ENCODE measurements at regions of chr5 and their contacts with region 1.

Region 1: GRCh38 chr5:170633235-170634081 is 129.6 kb downstream of the KCNIP1 start:
- DNase-seq: peak; percentile 61 to 76
- H3K4me3 ChIP-seq: peak overlapping the region; percentile 55
- H3K27ac ChIP-seq: peak overlapping the region; percentile 60
- H3K4me1 ChIP-seq: peaks cover 11% of the 10 kb centered on the region
- H3K27me3 ChIP-seq: no peaks in the 10 kb centered on the region
- CTCF ChIP-seq: peak; percentile 42; the same call in 1 of the 2 replicates

Region 2: GRCh38 chr5:168987543-168988300 is 1645.7 kb before region 1 on chr5:
- CTCF ChIA-PET with region 1: no interaction called
- POLR2A ChIA-PET with region 1: no interaction called
- intact Hi-C with region 1: loop called (anchors 5 kb)
- DNase-seq: peak; percentile 44 to 61
- H3K4me3 ChIP-seq: no peak overlapping the region
- H3K27ac ChIP-seq: no peak overlapping the region
- H3K4me1 ChIP-seq: no peaks in the 10 kb centered on the region
- H3K27me3 ChIP-seq: peaks cover 65% of the 10 kb centered on the region
- CTCF ChIP-seq: peak; percentile 89

Region 3: DNA sequence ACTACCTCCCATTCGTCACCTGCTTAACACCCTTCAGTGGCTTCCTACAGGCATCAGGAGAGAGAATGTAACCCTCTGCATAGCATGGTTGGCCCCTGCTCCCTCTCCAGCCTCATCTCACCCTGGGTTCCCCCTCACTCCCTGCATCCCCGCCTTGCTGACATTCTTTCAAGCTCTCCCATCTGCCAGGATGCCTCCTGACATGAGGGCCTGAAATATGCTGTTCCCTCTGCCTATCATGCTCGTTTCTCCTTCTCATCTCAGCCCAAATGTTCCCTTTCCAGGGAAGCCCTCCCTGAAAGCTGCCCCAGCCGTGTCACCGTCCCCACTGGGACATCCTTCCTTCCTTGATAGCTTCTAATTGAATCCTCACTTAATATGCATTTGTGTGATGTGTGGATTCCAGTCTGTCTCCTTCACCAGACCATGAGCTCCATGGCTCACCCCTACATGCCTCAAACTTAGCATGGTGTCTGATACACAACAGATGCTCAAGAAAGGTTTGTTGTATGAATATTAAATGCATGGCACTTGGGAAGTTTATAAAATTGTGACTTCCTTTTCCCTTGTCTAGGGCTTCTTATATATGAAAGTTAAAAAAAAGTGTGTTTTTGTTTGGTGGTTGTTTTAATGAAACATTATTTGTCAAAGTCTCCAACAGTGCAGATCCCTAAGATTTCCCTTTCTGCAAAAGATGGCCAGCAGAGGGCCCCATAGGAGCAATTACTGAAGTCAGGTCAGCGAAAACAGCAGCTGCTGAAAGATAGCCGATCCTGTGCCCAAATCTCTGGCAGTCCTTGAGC is 407.9 kb before region 1 on chr5:
- CTCF ChIA-PET with region 1: interaction called, 3 read pairs
- POLR2A ChIA-PET with region 1: no interaction called
- intact Hi-C with region 1: loop called (anchors 1 kb)
- DNase-seq: peak; percentile 40 to 50
- H3K4me3 ChIP-seq: no peak overlapping the region
- H3K27ac ChIP-seq: no peak overlapping the region
- H3K4me1 ChIP-seq: peaks cover 3% of the 10 kb centered on the region
- H3K27me3 ChIP-seq: no peaks in the 10 kb centered on the region
- CTCF ChIP-seq: peak; percentile 88

Region 4: DNA sequence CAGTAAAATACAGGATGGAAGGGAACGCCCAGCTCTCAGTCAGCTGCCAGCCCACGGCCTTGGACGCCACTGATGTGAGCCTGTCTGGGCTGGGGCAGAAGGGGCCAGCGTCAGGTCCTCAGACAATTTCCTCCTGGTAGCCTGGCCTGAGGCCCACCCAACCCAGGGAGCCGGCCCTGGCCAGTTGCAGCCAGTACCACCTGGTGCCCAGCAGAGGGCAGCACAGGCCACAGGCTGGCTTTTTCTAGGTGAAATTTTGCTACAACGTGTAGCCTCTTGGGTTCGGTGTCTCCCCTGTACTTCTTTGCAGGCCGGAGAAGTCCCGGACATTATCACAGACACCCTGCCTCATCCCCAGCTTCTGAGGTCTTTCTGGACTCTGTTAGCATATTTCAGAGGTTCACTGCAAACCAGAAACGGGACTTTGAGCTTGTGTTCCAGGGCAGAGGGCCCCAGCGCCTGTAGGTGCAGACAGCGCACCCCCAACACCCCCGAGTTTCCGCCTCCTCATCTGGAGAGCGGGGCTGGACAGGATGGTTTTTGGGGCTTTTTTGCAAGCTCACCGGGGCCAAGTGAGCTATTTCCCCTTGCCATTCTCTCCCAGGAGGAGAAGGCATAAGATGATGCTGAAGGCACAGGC is 198.4 kb before region 1 on chr5:
- CTCF ChIA-PET with region 1: interaction called, 3 read pairs
- POLR2A ChIA-PET with region 1: no interaction called
- intact Hi-C with region 1: loop called (anchors 2 kb)
- DNase-seq: peak; percentile 39 to 45
- H3K4me3 ChIP-seq: no peak overlapping the region
- H3K27ac ChIP-seq: no peak overlapping the region
- H3K4me1 ChIP-seq: no peaks in the 10 kb centered on the region
- H3K27me3 ChIP-seq: peaks cover 5% of the 10 kb centered on the region; the same call in 1 of the 2 replicates
- CTCF ChIP-seq: peak; percentile 95

Region 5: DNA sequence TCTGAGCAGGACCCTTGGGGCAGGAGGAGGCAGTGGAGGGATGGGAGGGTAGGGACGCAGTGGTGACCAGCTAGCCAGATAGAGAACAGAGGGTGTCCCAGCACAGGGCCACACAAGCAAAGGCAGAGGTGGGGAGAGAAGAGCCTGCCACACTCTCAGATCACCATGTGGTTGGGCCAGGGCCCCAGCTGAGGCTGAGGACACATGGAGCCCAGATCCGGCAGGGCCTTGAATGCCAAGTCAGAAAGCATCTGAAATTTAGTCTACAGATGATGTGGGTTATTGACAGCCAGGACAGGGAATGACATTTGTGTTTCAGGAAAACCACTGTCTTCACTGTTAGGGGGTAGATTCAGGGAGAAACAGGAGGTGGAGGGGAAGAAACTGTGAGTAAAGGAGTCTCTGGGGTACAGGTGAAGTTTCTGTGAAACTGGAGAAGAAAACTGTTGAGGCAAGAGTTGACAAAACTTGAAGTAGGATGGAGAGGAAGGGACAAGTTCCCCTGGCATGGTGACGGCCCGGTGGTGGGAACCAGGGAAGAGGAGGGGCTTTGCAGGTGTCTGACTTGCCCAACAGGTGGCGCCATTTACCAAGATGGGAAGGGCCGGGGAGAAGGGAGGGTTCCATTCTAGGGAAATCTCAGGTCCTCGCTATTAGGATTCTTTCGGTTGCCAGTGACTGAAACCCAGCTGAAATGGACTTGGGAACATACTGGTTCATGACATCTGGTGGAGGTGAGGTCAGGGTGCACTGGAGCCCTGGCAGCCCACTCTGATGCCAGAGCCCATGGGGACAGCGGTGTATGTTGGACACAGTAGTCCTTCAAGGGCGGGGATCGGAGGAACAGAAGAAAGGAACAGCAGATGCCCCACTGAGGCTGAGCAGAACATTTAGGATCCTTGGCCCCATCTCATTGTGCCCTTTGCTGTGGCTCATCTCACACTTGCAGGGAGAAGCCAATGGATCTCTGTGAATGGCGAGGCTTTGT is 29.6 kb before region 1 on chr5:
- CTCF ChIA-PET with region 1: no interaction called
- POLR2A ChIA-PET with region 1: no interaction called
- intact Hi-C with region 1: no loop called
- DNase-seq: peak in 1 of 2 experiments; percentile 38
- H3K4me3 ChIP-seq: no peak overlapping the region
- H3K27ac ChIP-seq: no peak overlapping the region
- H3K4me1 ChIP-seq: no peaks in the 10 kb centered on the region
- H3K27me3 ChIP-seq: peaks cover 14% of the 10 kb centered on the region; the same call in 1 of the 2 replicates
- CTCF ChIP-seq: peak; percentile 85

Region 6: GRCh38 chr5:170903075-170903474 is 269.6 kb after region 1 on chr5:
- CTCF ChIA-PET with region 1: no interaction called
- POLR2A ChIA-PET with region 1: no interaction called
- intact Hi-C with region 1: no loop called
- DNase-seq: no peak
- H3K4me3 ChIP-seq: no peak overlapping the region
- H3K27ac ChIP-seq: no peak overlapping the region
- H3K4me1 ChIP-seq: no peaks in the 10 kb centered on the region
- H3K27me3 ChIP-seq: no peaks in the 10 kb centered on the region
- CTCF ChIP-seq: no peak

Region 7: DNA sequence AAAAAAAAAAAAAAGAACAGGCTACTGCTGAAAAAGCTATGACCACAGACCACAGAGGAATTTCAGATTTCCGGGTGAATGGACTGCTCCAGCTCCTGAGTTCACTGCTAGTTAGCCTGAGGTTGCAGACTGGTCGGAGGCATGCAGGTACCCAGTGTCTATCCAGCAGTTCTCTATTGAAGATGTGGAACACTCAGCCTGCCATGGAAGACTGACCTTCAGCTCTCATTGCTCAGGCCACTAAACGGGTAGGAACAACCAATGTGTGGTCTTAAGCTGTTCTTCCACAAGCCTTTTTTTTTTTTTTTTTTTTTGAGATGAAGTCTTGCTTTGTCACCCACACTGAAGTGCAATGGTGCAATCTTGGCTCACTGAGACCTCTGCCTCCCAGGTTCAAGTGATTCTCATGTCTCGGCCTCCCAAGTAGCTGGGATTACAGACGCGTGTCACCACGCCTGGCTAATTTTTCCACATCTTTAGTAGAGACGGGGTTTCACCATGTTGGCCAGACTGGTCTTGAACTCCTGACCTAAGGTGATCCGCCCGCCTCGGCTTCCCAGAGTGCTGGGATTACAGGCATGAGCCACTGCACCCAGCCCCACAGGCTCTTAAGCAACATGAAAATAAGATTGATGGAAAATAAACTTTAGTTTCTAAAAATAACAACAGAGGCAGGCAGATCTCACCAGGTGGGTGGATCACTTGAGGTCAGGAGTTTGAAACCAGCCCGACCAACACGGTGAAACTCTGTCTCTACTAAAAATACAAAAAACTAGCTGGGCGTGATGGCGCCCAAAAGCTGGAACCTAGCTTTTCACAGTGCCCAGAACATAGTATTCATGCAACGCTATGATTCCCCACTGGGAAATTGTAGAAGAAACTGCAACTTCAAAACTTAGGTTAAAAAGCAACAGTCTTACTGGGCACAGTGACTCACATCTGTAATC is 734.2 kb after region 1 on chr5:
- CTCF ChIA-PET with region 1: interaction called, 16 read pairs
- POLR2A ChIA-PET with region 1: no interaction called
- intact Hi-C with region 1: no loop called
- DNase-seq: peak; percentile 73 to 77
- H3K4me3 ChIP-seq: no peak overlapping the region
- H3K27ac ChIP-seq: no peak overlapping the region
- H3K4me1 ChIP-seq: peaks cover 8% of the 10 kb centered on the region
- H3K27me3 ChIP-seq: no peaks in the 10 kb centered on the region
- CTCF ChIP-seq: no peak